ENCODE measurements at regions of chr4 and their contacts with region 1.

Region 1: GRCh38 chr4:10164877-10165283 is 48.3 kb upstream of the WDR1 start:
- DNase-seq: no peak
- ATAC-seq: no peak
- H3K4me3 ChIP-seq: no peak overlapping the region
- H3K27ac ChIP-seq: no peak overlapping the region
- H3K4me1 ChIP-seq: no peaks in the 10 kb centered on the region
- H3K27me3 ChIP-seq: no peaks in the 10 kb centered on the region

Region 2: DNA sequence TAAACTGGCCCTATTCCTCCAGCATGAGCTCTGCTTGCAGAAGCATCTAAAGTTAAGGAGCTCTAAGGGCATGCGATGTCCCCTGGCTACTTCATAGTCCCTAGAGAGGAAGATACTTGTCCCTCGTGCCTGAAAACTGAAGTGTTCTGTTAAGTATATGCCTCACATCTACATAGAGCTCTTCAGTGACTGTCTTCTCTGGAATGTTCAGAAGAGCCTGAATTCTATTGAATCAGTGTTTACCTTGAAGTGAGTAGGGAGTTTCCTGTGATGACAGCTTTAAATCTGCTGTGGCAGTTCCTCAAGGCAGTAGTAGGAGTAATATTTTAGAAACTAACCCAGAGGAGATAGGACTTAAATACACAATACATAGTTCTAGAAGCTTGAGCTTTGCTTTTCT is 181.1 kb after region 1 on chr4:
- intact Hi-C with region 1: no loop called
- DNase-seq: no peak
- ATAC-seq: no peak
- H3K4me3 ChIP-seq: no peak overlapping the region
- H3K27ac ChIP-seq: no peak overlapping the region
- H3K4me1 ChIP-seq: no peaks in the 10 kb centered on the region
- H3K27me3 ChIP-seq: peaks cover 0 to 5% of the 10 kb centered on the region in 2 donors

Region 3: GRCh38 chr4:10384974-10385373 is 220.1 kb after region 1 on chr4:
- intact Hi-C with region 1: loop called in 1 of 2 experiments (anchors 5 kb)
- DNase-seq: no peak
- ATAC-seq: no peak
- H3K4me3 ChIP-seq: no peak overlapping the region
- H3K27ac ChIP-seq: no peak overlapping the region
- H3K4me1 ChIP-seq: no peaks in the 10 kb centered on the region
- H3K27me3 ChIP-seq: no peaks in the 10 kb centered on the region

Region 4: DNA sequence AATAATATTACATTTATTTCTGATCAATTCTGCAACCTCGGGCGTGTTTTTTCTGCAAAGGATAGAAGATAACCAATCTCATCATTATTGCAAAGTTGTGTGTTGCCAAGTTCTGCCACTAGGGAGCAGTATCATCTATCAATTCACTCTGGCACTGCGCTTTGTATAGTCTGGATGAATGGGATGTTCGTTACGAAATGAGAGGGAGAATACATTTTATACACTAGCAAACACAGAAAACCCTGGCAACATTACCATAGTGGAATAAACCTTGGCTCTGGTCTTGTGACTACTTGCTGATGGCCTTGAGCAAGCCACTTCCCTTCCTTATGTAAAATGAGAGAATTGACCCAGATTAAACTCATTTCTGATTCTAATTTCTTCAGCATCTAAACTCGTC is 389.8 kb after region 1 on chr4:
- intact Hi-C with region 1: loop called in 1 of 2 experiments (anchors 5 kb)
- DNase-seq: no peak
- ATAC-seq: peak; percentile 84
- H3K4me3 ChIP-seq: no peak overlapping the region
- H3K27ac ChIP-seq: no peak overlapping the region
- H3K4me1 ChIP-seq: no peaks in the 10 kb centered on the region
- H3K27me3 ChIP-seq: peaks cover 0 to 2% of the 10 kb centered on the region in 2 donors

Measured in aorta (tissue), 5 donors.